Heart right ventricle (tissue), 16 donors: ENCODE measurements at regions of chr20 and their contacts with region 1.

Region 1: DNA sequence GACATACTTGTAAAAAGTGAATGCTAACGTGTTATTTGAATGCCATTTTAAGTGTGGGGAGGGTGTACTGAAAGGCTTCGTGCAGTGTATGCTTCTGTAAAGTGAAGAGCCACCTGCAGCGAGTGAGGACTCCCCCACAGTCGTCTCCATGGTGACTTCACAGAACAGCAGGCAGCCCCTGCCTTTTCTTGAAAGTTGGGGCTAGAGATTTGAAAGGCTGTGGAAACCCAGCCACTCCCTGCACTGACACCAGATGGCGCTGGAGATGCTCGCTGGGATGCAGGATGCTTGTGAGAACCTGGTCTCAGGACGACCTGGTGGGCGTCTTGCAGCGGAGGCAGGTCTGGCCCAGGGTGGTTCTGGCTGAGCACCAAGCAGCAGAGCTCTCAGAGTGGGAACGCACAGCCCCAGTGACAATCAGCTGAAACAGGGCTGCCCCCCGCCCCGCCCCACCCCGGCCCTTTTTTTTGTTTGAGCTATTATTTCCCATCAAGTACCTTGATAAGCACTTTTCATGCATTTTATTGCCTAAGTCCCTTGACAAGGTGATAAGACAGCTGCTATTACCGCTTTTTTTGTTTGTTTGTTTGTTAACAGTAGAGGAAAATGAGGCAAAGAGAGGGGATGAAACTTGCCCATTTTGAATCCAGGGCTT is 150.3 kb downstream of the SYCP2 start:
- DNase-seq: peak; percentile 39 to 62
- ATAC-seq: peak in 7 of 8 donors; percentile 39 to 64 (median 55)
- H3K4me3 ChIP-seq: no peak overlapping the region
- H3K27ac ChIP-seq: no peak overlapping the region
- H3K4me1 ChIP-seq: no peaks in the 10 kb centered on the region
- H3K27me3 ChIP-seq: no peaks in the 10 kb centered on the region
- CTCF ChIP-seq: peak; percentile 76 to 90 (median 87)

Region 2: DNA sequence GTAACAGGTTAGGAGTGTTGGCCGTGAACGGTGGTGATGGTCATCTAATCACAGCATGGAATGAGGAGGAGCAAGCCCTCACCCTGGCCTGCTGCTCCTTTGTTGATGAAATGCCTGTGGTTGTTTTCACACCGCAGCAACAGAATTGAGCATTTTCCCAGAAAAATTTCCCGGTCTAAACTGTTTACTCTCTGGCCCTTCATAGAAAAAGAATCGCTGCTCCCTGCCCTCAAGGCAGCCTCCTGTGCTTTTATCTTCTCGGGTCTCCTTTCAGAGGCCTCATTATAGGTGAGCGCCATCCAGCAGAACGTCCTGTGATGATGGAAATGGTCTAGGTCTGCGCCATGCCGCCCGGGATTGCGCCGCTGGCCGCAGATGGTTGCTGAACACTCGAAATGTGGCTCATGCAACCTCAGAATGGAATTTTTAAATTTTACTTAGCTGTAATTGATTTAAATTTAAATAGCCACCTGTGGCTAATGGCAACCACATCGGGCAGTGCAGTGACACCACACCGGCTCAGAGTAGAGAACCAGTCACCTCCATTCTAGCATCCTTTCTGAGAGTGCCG is 148.6 kb before region 1 on chr20:
- intact Hi-C with region 1: no loop called
- DNase-seq: no peak
- ATAC-seq: no peak
- H3K4me3 ChIP-seq: no peak overlapping the region
- H3K27ac ChIP-seq: no peak overlapping the region
- H3K4me1 ChIP-seq: peaks cover 0 to 6% (median 0%) of the 10 kb centered on the region in 9 donors
- H3K27me3 ChIP-seq: peaks cover 0 to 23% (median 0%) of the 10 kb centered on the region in 7 donors
- CTCF ChIP-seq: no peak

Region 3: DNA sequence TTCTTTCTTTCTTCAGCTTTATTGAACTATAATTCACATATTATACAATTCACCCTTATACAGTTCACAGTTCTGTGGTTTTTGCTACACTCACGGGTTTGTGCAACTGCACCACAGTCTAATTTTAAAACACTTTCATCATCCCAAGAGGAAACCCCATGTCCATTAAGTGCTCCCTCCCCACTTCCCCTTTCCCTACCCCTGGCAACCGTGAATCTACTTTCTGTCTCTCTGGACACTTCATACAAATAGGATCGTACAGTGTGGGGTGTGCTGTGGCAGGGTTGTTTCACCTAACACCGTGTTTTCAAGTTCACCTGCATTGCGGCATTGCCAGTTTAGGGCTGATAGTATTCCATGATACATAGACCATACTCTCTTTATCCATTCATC is 60.0 kb before region 1 on chr20:
- intact Hi-C with region 1: no loop called
- DNase-seq: no peak
- ATAC-seq: peak in 5 of 8 donors; percentile 29 to 82 (median 50)
- H3K4me3 ChIP-seq: no peak overlapping the region
- H3K27ac ChIP-seq: no peak overlapping the region
- H3K4me1 ChIP-seq: peaks cover 0 to 24% (median 0%) of the 10 kb centered on the region in 9 donors
- H3K27me3 ChIP-seq: peaks cover 0 to 86% (median 14%) of the 10 kb centered on the region in 7 donors
- CTCF ChIP-seq: no peak

Region 4: GRCh38 chr20:59835448-59836395 is 52.6 kb after region 1 on chr20:
- intact Hi-C with region 1: loop called in 1 of 10 experiments (anchors 10 kb)
- DNase-seq: peak; percentile 36 to 40
- ATAC-seq: peak; percentile 54 to 81 (median 74)
- H3K4me3 ChIP-seq: peak overlapping the region in 8 of 10 donors; percentile 7 to 45 (median 38)
- H3K27ac ChIP-seq: peak overlapping the region in 7 of 10 donors; percentile 31 to 67 (median 38)
- H3K4me1 ChIP-seq: peaks cover 6 to 68% (median 44%) of the 10 kb centered on the region in 9 donors
- H3K27me3 ChIP-seq: peaks cover 0 to 7% (median 0%) of the 10 kb centered on the region in 7 donors
- CTCF ChIP-seq: no peak

Region 5: DNA sequence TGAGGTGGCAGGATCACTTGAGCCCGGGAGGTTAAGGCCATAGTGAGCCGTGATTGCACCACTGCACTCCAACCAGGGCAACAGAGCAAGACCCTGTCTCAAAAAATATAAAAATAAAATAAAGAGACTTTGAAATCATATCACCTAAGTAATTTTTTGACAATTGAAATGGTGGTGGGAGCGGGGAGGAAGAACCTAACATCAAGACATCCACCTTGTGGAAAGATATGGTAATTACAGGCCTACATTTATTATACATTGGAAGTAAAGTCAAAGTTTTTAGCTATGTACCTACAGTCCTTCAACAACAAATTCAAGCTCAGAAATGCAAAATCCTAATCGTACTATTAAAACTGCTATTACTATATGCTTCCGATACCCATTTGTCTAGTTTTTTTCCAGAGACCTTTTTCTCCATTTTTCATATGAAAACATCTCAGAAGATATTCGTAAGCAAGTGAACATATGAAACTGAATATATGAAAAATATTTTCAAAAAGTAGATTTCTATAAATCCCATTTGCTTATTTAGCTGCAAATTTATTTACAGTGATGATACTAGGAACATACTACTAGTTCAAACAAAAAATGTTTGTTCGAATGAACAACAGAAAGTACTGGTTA is 67.0 kb after region 1 on chr20:
- intact Hi-C with region 1: loop called (anchors 1 to 5 kb)
- DNase-seq: no peak
- ATAC-seq: peak in 1 of 8 donors; percentile 39
- H3K4me3 ChIP-seq: no peak overlapping the region
- H3K27ac ChIP-seq: no peak overlapping the region
- H3K4me1 ChIP-seq: no peaks in the 10 kb centered on the region
- H3K27me3 ChIP-seq: no peaks in the 10 kb centered on the region
- CTCF ChIP-seq: peak; percentile 48 to 78 (median 71)

Region 6: DNA sequence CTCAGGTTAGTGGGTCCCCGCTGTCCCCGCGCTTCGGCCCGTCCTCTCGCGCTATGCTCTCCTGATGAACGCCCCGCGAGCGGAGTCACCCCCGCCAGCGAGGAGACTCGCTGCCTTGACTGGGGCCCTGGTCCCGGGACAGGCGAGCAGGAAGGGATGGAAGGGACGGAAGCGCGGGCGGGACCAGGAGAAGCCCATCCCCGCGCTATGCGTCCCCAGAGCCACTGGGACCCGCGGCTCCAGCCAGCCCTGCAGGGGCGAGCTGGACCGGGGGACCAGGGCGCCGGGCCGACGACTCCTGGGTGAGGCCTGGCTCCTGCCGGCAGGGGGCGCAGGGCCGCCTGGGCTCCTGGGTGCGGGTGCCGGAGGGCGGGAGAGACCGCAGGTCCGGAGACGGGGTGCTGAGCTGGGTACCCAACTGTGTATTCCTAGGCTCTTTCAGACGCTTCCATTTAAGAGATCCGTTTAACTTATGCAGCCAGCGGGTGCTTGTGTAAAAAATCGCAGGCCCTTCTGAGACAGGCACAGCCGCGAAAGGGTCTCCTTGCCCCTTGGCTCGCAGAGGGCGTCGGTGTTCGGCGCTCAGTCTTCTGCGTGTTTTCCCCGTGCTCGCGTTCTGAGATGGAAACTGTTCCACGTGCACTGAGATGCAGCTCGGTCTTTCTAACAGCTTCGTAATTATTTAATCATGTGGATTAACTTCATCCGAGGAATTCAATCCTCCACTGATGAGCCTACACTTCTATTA is 150.9 kb after region 1 on chr20:
- intact Hi-C with region 1: loop called in 1 of 10 experiments (anchors 10 kb)
- DNase-seq: peak; percentile 80 to 86
- ATAC-seq: peak; percentile 90 to 94 (median 91)
- H3K4me3 ChIP-seq: peak overlapping the region; percentile 62 to 97 (median 77)
- H3K27ac ChIP-seq: peak overlapping the region; percentile 5 to 90 (median 83)
- H3K4me1 ChIP-seq: peaks cover 3 to 50% (median 39%) of the 10 kb centered on the region in 9 donors
- H3K27me3 ChIP-seq: no peaks in the 10 kb centered on the region
- CTCF ChIP-seq: peak; percentile 91 to 99 (median 97)